ENCODE measurements at regions of chr11 and their contacts with region 1.

Region 1: GRCh38 chr11:2532704-2533586 is 88.1 kb downstream of the KCNQ1 start:
- DNase-seq: peak; percentile 83 to 95
- ATAC-seq: peak; percentile 77 to 92
- H3K4me3 ChIP-seq: no peak overlapping the region
- H3K27ac ChIP-seq: no peak overlapping the region
- H3K4me1 ChIP-seq: no peaks in the 10 kb centered on the region
- CTCF ChIP-seq: peak; percentile 99
- EP300 ChIP-seq: no peak
- POLR2A ChIP-seq: no peak
- RAD21 ChIP-seq: peak; percentile 99 to 100

Region 2: DNA sequence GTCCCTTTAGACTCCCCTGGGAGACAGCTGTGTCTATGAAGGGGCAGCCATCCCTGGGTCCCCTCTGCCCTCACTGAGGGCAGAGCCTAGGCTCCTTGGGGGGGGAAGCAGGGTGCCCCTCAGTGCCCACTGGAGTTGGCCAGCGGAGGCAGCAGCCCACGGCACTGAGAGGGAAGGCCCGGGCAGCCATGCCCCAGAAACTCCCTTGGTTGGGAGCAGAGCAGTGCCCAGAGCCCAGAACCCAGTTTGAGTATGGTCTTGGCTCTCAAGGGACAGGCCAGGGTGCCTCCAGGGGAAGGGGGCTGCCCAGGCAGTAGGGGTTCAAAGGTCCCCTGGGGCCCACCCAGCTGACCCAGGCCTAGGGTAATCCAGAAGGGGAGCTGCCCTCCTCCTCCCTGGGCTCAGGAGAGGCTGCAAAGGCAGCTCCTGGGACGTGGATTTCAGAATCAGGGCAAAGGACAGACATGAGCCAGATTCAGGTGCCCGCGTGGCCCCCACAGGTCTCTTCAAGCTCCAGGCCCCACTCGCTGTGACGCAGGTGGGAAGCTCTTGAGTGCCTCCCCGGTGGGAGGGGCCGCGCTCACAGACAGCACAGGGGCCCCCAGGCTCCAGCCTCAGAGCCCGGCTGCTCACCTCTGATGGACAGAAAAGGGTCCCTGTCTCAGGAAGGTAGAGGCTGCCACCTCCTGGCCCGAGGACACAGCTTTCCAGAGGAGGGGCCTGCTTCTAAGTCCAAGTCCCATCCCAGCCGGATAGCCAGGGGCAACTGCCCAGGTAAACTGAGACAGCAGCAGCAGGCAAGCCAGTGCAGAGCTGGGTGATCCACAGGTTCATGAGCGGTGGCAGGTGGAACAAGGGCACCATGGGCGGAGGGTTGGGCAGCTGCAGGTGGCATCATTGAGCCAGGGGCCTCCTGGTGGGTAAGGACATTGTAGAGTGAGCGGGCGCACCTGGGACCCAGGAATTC is 233.9 kb before region 1 on chr11:
- CTCF ChIA-PET with region 1: interaction called, 27 read pairs
- POLR2A ChIA-PET with region 1: no interaction called
- DNase-seq: peak; percentile 57 to 59
- ATAC-seq: peak in 1 of 2 experiments; percentile 81; a peak in 3 of 6 replicates
- H3K4me3 ChIP-seq: no peak overlapping the region
- H3K27ac ChIP-seq: no peak overlapping the region
- H3K4me1 ChIP-seq: no peaks in the 10 kb centered on the region
- CTCF ChIP-seq: peak; percentile 45
- EP300 ChIP-seq: no peak
- POLR2A ChIP-seq: no peak
- RAD21 ChIP-seq: peak; percentile 72 to 81

Region 3: DNA sequence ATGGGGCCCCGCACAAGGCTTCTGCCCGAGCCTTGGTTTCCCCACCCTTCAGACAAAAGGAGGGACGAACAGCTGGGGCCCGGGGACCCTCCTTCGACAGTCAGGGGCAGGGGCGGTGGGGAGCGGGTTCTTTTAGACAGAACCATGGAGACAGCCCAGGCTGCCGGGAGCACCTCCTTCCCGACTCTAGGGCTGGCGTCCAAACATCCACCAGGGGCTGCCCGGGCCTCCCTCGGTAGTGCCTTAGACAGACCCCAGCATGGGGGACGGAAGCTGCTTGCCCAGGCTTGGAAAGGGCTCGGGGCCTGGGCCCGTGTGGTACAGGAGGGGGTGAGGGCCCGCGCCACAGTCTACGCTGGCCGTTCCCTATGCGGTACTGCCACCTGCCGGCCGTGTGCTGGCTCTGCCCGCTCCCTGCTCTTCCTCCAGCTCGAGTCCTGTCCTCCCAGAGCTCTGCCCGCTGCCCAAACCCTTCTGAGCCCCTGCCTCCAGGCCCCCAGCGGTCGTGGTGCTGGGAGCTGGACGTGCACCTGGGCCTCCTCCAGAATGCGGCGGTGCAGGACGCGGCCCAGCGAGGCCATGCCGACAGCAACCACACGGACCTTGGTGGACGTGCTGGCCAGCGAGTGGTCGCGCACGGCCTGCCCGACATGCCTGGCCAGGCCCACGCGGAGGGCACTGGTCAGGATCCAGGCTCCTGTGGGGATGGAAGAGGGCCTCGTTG is 112.3 kb before region 1 on chr11:
- CTCF ChIA-PET with region 1: interaction called, 333 read pairs
- POLR2A ChIA-PET with region 1: no interaction called
- DNase-seq: peak; percentile 69 to 91
- ATAC-seq: peak; percentile 90 to 97
- H3K4me3 ChIP-seq: no peak overlapping the region
- H3K27ac ChIP-seq: peak overlapping the region in 1 of 2 experiments; percentile 62; a peak in 3 of 6 replicates
- H3K4me1 ChIP-seq: no peaks in the 10 kb centered on the region
- CTCF ChIP-seq: peak; percentile 84
- EP300 ChIP-seq: no peak
- POLR2A ChIP-seq: no peak
- RAD21 ChIP-seq: peak; percentile 92

Region 4: GRCh38 chr11:2511421-2512369 is 21.2 kb before region 1 on chr11:
- CTCF ChIA-PET with region 1: interaction called, 83 read pairs
- POLR2A ChIA-PET with region 1: no interaction called
- DNase-seq: no peak
- ATAC-seq: no peak
- H3K4me3 ChIP-seq: no peak overlapping the region
- H3K27ac ChIP-seq: no peak overlapping the region
- H3K4me1 ChIP-seq: no peaks in the 10 kb centered on the region
- CTCF ChIP-seq: no peak
- EP300 ChIP-seq: no peak
- POLR2A ChIP-seq: no peak
- RAD21 ChIP-seq: no peak

Region 5: GRCh38 chr11:2686360-2687222 is 153.6 kb after region 1 on chr11:
- CTCF ChIA-PET with region 1: interaction called, 11 read pairs
- POLR2A ChIA-PET with region 1: no interaction called
- DNase-seq: no peak
- ATAC-seq: no peak
- H3K4me3 ChIP-seq: no peak overlapping the region
- H3K27ac ChIP-seq: no peak overlapping the region
- H3K4me1 ChIP-seq: no peaks in the 10 kb centered on the region
- CTCF ChIP-seq: no peak
- EP300 ChIP-seq: no peak
- POLR2A ChIP-seq: no peak
- RAD21 ChIP-seq: no peak

Region 6: DNA sequence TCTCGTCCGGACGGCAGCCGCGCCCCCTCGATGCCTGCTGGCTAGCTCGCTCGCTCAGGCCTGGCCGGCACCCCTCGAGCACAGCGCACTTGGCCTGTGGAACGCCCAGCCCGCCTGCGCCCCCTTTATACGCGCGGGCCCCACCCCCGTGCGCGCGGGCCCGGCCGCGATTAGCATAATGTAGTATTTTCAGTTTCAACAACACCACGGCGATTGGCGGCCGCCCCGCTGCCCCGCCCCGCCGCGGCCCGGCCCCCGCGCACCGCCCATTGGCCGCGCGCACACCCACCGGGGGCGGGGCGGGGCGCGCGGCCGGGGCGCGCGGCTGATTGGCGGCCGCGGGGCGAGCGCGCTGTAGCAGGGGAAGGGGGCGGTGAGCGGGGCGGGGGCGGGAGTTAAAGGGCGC is 352.7 kb after region 1 on chr11 and contains the start of gene CDKN1C:
- CTCF ChIA-PET with region 1: interaction called, 1,059 read pairs
- POLR2A ChIA-PET with region 1: interaction called, 15 read pairs
- DNase-seq: peak; percentile 71 to 78
- ATAC-seq: peak; percentile 57 to 74
- H3K4me3 ChIP-seq: peak within 1 kb of the TSS; percentile 71
- H3K27ac ChIP-seq: peak within 1 kb of the TSS; percentile 66 to 82; a peak in 5 of 6 replicates
- H3K4me1 ChIP-seq: peaks cover 5% of the 10 kb centered on the region; the same call in 1 of the 3 replicates
- CTCF ChIP-seq: no peak
- EP300 ChIP-seq: no peak
- POLR2A ChIP-seq: peak; percentile 40
- RAD21 ChIP-seq: no peak
- polyA plus RNA-seq, gene CDKN1C: 0.40 and 0.41 TPM in 2 replicates

Region 7: GRCh38 chr11:3091791-3092602 is 559.1 kb after region 1 on chr11:
- CTCF ChIA-PET with region 1: interaction called, 14 read pairs
- POLR2A ChIA-PET with region 1: no interaction called
- DNase-seq: peak; percentile 83 to 89
- ATAC-seq: peak; percentile 78 to 93
- H3K4me3 ChIP-seq: no peak overlapping the region
- H3K27ac ChIP-seq: no peak overlapping the region
- H3K4me1 ChIP-seq: no peaks in the 10 kb centered on the region
- CTCF ChIP-seq: peak; percentile 96
- EP300 ChIP-seq: no peak
- POLR2A ChIP-seq: no peak
- RAD21 ChIP-seq: peak; percentile 90 to 92

Measured in A549 (cell line).